SK-N-SH (cell line): ENCODE measurements at regions of chr16 and their contacts with region 1.

Region 1: GRCh38 chr16:84062734-84063640 is 20.4 kb upstream of the SLC38A8 start:
- DNase-seq: peak; percentile 86
- H3K4me3 ChIP-seq: peak overlapping the region in 1 of 2 experiments; percentile 44; a peak in 1 of 4 replicates
- H3K27ac ChIP-seq: no peak overlapping the region; a peak in 2 of 4 replicates
- H3K4me1 ChIP-seq: peaks cover 0 to 6% of the 10 kb centered on the region in 2 experiments; a peak in 2 of 4 replicates
- H3K27me3 ChIP-seq: no peaks in the 10 kb centered on the region
- CTCF ChIP-seq: peak; percentile 95
- EP300 ChIP-seq: no peak
- RAD21 ChIP-seq: peak; percentile 57

Region 2: DNA sequence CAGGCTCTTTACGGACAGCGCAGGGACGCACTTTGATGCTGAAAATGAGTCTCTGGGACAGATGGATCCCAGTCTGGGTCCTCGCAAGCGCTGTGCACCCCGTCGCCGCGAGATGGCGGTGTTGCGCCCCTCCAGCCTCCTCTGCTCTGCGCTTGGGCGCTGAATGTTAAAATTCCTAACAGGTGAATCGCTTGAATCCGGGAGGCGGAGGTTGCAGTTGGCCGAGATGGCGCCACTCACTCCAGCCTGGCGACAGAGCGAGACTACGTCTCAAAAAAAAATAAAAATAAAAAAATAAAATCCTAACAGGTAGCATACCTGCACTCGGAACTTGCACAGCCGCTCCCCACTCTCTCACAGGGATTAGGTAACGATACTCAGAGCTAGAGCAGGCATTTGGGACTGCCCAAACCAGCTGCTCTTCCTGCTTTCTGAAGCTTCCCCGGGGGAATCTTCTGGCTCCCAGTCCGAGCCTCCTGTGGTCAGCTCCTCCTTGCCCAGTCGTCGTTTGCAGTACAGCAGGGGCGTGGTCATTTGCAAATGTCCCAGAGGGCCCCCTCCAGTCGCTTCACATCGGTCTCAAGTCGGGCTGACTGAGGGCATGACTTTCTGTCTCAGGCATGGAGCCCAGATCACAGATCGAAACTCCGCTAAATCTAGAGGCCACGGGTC is 136.1 kb before region 1 on chr16:
- CTCF ChIA-PET with region 1: interaction called, 27 read pairs
- POLR2A ChIA-PET with region 1: no interaction called
- DNase-seq: peak; percentile 90
- H3K4me3 ChIP-seq: peak overlapping the region in 1 of 2 experiments; percentile 51; a peak in 1 of 4 replicates
- H3K27ac ChIP-seq: no peak overlapping the region
- H3K4me1 ChIP-seq: peaks cover 0 to 11% of the 10 kb centered on the region in 2 experiments; a peak in 1 of 4 replicates
- H3K27me3 ChIP-seq: no peaks in the 10 kb centered on the region
- CTCF ChIP-seq: peak; percentile 95
- EP300 ChIP-seq: no peak
- RAD21 ChIP-seq: peak; percentile 73

Region 3: GRCh38 chr16:83942815-83943515 is 120.0 kb before region 1 on chr16:
- CTCF ChIA-PET with region 1: interaction called, 19 read pairs
- POLR2A ChIA-PET with region 1: no interaction called
- DNase-seq: no peak
- H3K4me3 ChIP-seq: no peak overlapping the region
- H3K27ac ChIP-seq: no peak overlapping the region
- H3K4me1 ChIP-seq: no peaks in the 10 kb centered on the region
- H3K27me3 ChIP-seq: no peaks in the 10 kb centered on the region
- CTCF ChIP-seq: no peak
- EP300 ChIP-seq: no peak
- RAD21 ChIP-seq: no peak

Region 4: DNA sequence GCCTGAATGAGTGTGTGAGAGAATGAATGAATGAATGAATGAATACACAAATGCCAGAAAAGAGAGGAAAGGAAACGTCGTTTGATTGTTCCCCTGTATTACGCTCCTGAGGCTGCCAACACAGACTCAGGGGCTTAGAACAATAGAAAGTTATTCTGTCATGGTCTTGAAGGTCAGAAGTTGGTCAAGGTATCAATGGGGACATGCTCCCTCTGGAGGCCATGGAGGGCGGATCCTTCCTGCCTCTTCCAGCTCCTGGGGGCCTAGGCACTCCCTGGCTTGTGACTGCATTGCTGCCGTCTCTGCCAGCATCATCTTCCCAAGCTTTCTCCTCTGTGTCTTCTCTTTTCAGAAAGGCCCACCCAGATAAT is 18.9 kb before region 1 on chr16:
- CTCF ChIA-PET with region 1: interaction called, 32 read pairs
- POLR2A ChIA-PET with region 1: interaction called, 3 read pairs
- DNase-seq: peak; percentile 68
- H3K4me3 ChIP-seq: no peak overlapping the region
- H3K27ac ChIP-seq: no peak overlapping the region
- H3K4me1 ChIP-seq: peaks cover 0 to 5% of the 10 kb centered on the region in 2 experiments; a peak in 1 of 4 replicates
- H3K27me3 ChIP-seq: no peaks in the 10 kb centered on the region; the same call in 1 of the 2 replicates
- CTCF ChIP-seq: peak; percentile 63
- EP300 ChIP-seq: no peak
- RAD21 ChIP-seq: peak; percentile 45; the same call in 1 of the 2 replicates

Region 5: DNA sequence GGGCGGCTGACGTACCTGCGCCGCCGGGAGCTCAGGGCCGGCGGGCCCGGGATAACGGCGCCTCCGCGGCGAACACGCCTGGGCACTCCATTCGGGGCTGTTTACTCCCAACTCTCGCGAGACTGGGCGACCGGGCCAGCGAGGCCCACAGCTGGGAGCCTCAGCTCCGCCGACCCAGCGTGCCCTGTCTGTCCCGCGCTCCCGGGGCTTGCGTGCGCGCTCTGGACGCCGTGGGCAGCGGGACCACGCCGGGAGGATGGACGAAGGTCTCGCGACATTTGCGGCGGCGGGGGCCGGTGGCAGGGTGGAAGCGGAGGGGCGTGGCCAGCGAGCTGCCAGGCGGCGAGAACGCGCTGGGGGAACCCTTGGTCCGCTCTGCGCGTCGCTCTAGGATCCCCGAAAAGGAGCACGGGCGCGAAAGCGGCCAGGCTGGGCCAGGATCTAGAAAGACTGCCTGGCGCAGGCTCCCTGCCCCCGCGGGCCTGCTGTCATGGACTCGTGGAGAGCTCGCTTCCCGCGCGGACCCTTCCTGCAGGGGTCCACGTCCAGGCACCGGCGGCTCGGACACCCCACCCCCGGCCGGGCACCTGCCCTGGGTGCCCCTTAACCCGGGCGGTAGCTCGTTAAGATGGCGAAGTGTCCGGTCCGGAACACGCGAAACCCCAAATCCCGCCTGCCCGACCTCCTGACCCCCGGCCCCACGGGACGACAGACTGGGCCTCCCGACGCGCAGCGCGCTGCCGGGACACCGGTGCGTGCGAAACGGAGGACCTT is 53.9 kb after region 1 on chr16 and contains the start of gene MBTPS1:
- CTCF ChIA-PET with region 1: interaction called, 12 read pairs
- POLR2A ChIA-PET with region 1: no interaction called
- DNase-seq: peak; percentile 99
- H3K4me3 ChIP-seq: peak within 1 kb of the TSS; percentile 88 to 93
- H3K27ac ChIP-seq: peak within 1 kb of the TSS; percentile 59 to 73; a peak in 3 of 4 replicates
- H3K4me1 ChIP-seq: peaks cover 7 to 11% of the 10 kb centered on the region in 2 experiments; a peak in 3 of 4 replicates
- H3K27me3 ChIP-seq: no peaks in the 10 kb centered on the region
- CTCF ChIP-seq: no peak; the same call in 1 of the 2 replicates
- EP300 ChIP-seq: no peak; a peak in 1 of 4 replicates
- RAD21 ChIP-seq: no peak
- polyA plus RNA-seq, gene MBTPS1: 81.6 and 84.9 TPM in 2 replicates

Region 6: DNA sequence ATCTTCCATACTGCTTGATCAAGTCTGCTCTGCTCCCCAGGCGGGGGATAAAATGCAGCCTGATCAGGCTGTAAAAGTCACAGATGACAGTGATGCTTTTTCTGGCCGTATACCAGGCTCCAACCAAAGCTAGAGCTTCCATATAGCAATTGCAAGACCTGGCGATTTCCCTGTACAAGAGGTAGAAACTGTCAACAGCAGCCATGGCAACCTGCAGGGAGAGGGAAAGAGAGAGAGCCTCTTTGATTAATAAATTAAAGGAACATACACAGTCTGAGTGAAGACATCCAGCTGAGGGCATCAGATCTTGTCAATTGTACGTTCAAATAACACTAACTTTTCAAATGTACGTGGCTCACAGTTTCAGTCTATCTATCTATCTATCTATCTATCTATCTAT is 68.1 kb after region 1 on chr16:
- CTCF ChIA-PET with region 1: no interaction called
- POLR2A ChIA-PET with region 1: no interaction called
- DNase-seq: no peak
- H3K4me3 ChIP-seq: no peak overlapping the region
- H3K27ac ChIP-seq: no peak overlapping the region
- H3K4me1 ChIP-seq: no peaks in the 10 kb centered on the region
- H3K27me3 ChIP-seq: no peaks in the 10 kb centered on the region
- CTCF ChIP-seq: no peak
- EP300 ChIP-seq: no peak
- RAD21 ChIP-seq: no peak